Caco-2 (cell line): ENCODE measurements at regions of chr1 and their contacts with region 1.

Region 1: DNA sequence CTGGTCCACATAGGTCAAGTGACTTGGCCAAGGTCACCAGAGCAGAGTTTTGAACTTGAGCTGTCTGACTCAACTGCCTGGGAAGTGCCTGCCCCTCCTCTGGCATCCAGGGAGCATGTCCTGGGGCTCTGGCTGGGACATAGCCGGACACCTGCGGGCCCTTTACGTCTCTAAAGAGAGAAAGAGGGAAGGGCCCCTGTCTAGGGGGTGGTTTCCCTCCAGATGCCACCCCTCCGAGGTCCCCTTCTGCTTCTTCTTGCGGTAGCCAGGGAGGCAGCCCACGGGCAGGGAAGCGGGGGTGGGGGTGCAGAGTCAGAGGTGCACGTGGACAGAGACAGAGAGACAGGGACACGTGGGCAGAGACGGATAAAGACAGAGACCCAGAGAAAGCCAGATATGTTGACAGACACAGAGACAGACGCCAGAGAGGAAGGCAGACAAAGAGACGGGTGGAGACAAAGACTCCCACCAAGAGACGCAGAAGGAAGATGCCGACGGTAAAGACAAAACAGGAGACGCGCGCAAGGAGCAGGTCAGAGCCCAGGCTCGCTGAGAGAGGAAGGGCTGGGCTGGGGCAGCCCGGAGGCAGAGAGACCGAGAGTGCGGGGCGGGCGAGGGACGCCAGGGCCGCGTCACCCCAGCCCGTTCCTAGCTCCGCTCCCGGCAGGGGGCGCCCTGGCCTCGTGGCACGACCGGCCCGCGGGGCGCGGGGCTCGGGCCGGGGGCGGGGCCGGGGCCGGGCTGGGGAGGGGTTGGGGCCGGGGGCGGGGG is 458 bp upstream of the ALPL start:
- DNase-seq: peak; percentile 50 to 86
- H3K4me3 ChIP-seq: peak overlapping the region; percentile 25; the same call in 1 of the 2 replicates
- H3K4me3 Mint-ChIP-seq: peak overlapping the region; percentile 63
- H3K27ac Mint-ChIP-seq: peak overlapping the region; percentile 22
- H3K4me1 ChIP-seq: peaks cover 5% of the 10 kb centered on the region; the same call in 1 of the 2 replicates
- H3K4me1 Mint-ChIP-seq: peaks cover 7% of the 10 kb centered on the region
- H3K27me3 ChIP-seq: no peaks in the 10 kb centered on the region
- H3K27me3 Mint-ChIP-seq: no peaks in the 10 kb centered on the region
- CTCF ChIP-seq: peak; percentile 60 to 62

Region 2: GRCh38 chr1:21362096-21362495 is 146.7 kb before region 1 on chr1:
- CTCF ChIA-PET with region 1: no interaction called
- POLR2A ChIA-PET with region 1: no interaction called
- intact Hi-C with region 1: no loop called
- DNase-seq: no peak
- H3K4me3 ChIP-seq: no peak overlapping the region
- H3K4me3 Mint-ChIP-seq: no peak overlapping the region
- H3K27ac Mint-ChIP-seq: no peak overlapping the region
- H3K4me1 ChIP-seq: no peaks in the 10 kb centered on the region
- H3K4me1 Mint-ChIP-seq: no peaks in the 10 kb centered on the region
- H3K27me3 ChIP-seq: no peaks in the 10 kb centered on the region
- H3K27me3 Mint-ChIP-seq: no peaks in the 10 kb centered on the region
- CTCF ChIP-seq: no peak

Region 3: DNA sequence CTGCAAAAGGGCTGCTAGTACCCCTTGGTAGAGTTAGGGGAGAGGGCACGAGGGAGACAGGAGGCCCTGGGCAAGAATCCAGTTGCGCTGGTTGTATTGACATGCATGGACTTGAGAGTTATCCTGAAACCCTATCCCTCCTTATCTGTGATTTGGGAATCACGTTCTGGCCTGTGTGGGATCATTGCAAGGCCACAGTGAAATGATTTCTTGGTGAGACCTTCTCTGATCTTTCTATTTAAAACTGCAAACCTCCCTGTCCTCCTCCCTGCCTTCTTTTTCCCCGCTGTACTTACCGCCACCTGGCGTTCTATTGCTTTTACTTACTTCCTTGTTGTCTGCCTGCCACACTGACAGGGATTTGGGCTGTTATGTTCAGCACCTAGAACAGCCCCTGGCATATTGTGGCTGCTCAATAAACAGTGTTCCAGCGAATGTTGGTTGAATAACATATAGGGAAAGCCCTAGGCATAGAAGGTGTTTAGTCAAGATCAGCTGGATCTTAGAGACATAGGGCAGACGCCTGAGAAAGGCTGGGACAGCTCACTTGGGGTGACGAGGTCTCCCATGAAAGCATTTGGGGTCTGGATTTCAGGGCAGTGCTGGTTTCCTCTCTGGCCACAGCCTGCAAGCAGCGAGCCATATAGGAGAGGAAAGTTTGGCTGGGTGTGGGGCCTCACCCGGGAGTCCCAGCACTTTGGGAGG is 26.1 kb after region 1 on chr1:
- CTCF ChIA-PET with region 1: interaction called, 3 read pairs
- POLR2A ChIA-PET with region 1: interaction called, 6 read pairs
- intact Hi-C with region 1: loop called (anchors 2 kb)
- DNase-seq: peak; percentile 54 to 64
- H3K4me3 ChIP-seq: no peak overlapping the region
- H3K4me3 Mint-ChIP-seq: no peak overlapping the region
- H3K27ac Mint-ChIP-seq: no peak overlapping the region
- H3K4me1 ChIP-seq: peaks cover 6% of the 10 kb centered on the region; the same call in 1 of the 2 replicates
- H3K4me1 Mint-ChIP-seq: peaks cover 5% of the 10 kb centered on the region
- H3K27me3 ChIP-seq: no peaks in the 10 kb centered on the region
- H3K27me3 Mint-ChIP-seq: peaks cover 3% of the 10 kb centered on the region
- CTCF ChIP-seq: peak; percentile 37 to 61

Region 4: DNA sequence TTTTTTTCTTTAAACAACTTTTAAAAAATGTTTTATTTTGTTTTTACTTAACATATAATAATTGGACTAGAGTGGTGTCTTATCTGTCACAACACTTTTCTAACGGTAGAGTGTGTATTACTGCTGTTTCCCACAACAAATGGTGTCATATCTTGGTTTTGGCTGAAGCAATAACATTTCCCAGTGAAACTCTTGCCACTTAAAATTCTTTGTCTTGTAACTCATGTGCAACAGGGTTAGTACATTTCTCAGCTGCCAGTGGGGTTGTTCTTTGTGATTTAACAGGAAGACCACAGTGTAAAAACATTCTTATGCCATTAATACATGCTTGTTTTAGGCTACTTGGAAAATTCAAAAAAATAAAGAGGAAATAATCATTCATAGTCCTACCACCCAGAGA is 44.0 kb after region 1 on chr1:
- CTCF ChIA-PET with region 1: no interaction called
- POLR2A ChIA-PET with region 1: no interaction called
- intact Hi-C with region 1: no loop called
- DNase-seq: no peak
- H3K4me3 ChIP-seq: no peak overlapping the region
- H3K4me3 Mint-ChIP-seq: no peak overlapping the region
- H3K27ac Mint-ChIP-seq: no peak overlapping the region
- H3K4me1 ChIP-seq: no peaks in the 10 kb centered on the region
- H3K4me1 Mint-ChIP-seq: peaks cover 8% of the 10 kb centered on the region
- H3K27me3 ChIP-seq: no peaks in the 10 kb centered on the region
- H3K27me3 Mint-ChIP-seq: peaks cover 17% of the 10 kb centered on the region
- CTCF ChIP-seq: no peak

Region 5: GRCh38 chr1:21573971-21574465 is 65.3 kb after region 1 on chr1:
- CTCF ChIA-PET with region 1: no interaction called
- POLR2A ChIA-PET with region 1: no interaction called
- intact Hi-C with region 1: loop called (anchors 2 kb)
- DNase-seq: peak; percentile 71
- H3K4me3 ChIP-seq: no peak overlapping the region
- H3K4me3 Mint-ChIP-seq: no peak overlapping the region
- H3K27ac Mint-ChIP-seq: no peak overlapping the region
- H3K4me1 ChIP-seq: no peaks in the 10 kb centered on the region
- H3K4me1 Mint-ChIP-seq: no peaks in the 10 kb centered on the region
- H3K27me3 ChIP-seq: no peaks in the 10 kb centered on the region
- H3K27me3 Mint-ChIP-seq: no peaks in the 10 kb centered on the region
- CTCF ChIP-seq: peak; percentile 50 to 67